ENCODE measurements at regions of chr7 and their contacts with region 1.

Region 1: DNA sequence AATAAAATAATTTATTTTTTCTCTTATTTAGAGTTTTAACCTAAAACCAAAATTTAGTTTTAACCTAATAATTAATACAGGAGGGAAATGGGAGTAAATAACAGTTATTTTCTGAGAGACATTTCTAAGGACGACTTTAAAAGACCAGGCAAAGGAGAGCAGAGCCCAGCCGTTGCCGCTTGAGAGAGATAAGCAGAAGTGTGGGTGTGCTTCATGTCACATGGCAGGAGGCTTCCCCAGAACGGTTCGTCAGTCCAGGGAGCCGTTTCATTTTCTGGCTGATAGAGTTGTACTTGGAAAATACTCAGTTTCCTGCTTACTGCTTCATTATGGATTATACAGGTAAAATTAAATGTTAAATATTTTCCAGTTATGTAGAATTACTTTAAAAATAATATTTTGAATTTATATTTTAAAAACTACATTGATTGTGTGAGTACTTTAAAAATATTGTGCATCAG is 61.4 kb downstream of the ST7 start:
- DNase-seq: peak; percentile 38
- H3K4me3 Mint-ChIP-seq: no peak overlapping the region
- H3K27ac Mint-ChIP-seq: no peak overlapping the region
- H3K4me1 Mint-ChIP-seq: peaks cover 42% of the 10 kb centered on the region
- H3K27me3 Mint-ChIP-seq: peaks cover 3% of the 10 kb centered on the region

Region 2: DNA sequence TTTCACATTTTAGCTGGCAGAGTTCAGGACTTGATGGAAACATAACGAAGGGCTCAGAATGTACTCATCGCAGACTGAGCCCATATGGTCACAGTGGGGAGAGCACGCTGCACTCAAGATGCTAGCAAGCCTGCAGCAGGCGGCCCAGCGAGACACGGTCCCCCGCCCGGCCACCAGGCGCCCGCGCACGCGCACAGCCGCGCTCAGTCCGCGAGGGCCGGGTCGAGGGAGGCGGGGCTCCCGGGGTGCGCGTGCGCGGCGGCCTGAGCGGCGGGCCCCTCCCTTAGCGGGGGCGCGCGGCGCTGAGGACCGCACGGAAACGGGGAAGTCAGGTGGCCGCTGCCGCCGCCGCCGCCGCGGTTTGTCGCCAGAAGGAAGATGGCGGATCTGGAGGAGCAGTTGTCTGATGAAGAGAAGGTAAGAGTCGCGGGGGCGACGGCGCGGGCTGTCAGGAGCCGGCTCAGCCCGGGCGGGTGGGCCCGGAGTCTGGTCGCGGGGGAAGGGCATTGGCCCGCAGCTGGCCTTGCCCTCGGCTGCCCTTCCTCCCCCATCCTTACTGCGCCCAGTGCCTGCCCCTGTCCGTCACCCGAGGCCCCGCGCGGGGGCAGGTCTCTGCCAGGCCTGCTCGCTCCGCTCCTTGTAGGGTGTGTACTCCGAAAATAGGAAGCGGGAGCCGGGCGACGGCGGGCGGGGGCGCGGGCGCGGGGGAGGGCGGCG is 152.3 kb before region 1 on chr7 and contains the start of gene CAPZA2:
- CTCF ChIA-PET with region 1: no interaction called
- POLR2A ChIA-PET with region 1: no interaction called
- intact Hi-C with region 1: loop called (anchors 10 kb)
- DNase-seq: peak; percentile 95
- H3K4me3 Mint-ChIP-seq: peak within 1 kb of the TSS; percentile 88
- H3K27ac Mint-ChIP-seq: peak within 1 kb of the TSS; percentile 90
- H3K4me1 Mint-ChIP-seq: peaks cover 39% of the 10 kb centered on the region
- H3K27me3 Mint-ChIP-seq: peaks cover 6% of the 10 kb centered on the region
- total RNA-seq, gene CAPZA2: 163 to 176 TPM

Region 3: DNA sequence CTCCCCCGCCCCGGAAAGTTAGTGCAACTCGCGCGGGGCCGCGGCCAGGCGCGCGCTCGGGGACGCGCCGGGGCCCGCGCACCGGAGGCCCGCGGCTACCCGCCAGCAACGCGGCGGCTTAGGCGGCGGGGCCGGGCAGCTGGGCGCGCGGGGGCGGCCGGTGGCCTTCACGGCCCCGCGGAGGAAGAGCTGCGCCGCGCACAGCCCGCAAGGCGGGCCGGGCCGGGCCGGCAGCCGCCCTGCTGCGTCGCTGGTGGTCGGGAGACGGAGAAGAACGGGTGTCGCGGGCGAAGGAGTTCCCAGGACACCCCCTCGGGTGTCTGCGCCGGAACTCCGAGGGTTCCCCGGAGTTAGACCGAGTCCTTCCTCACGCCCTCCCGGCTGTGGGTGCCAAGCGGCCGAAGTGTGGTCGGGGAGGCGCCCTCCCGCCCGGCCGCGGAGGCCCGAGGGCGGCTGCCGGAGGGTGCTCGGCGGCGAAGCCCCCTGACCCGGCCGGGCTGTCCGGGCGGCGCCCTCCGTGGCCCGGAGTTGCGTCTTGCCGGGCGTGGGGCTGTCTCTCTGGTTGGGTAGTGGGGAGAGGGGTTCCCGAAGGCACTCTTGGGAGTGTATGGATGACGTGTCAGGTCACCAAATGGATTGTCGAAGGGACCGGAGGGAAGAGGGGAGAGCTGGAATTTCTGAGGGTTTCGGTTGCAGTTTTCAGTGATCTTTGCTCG is 60.8 kb before region 1 on chr7:
- CTCF ChIA-PET with region 1: interaction called, 6 read pairs
- POLR2A ChIA-PET with region 1: no interaction called
- intact Hi-C with region 1: loop called (anchors 1 kb)
- DNase-seq: peak; percentile 31
- H3K4me3 Mint-ChIP-seq: peak overlapping the region; percentile 92
- H3K27ac Mint-ChIP-seq: peak overlapping the region; percentile 87
- H3K4me1 Mint-ChIP-seq: peaks cover 24% of the 10 kb centered on the region
- H3K27me3 Mint-ChIP-seq: no peaks in the 10 kb centered on the region

Region 4: DNA sequence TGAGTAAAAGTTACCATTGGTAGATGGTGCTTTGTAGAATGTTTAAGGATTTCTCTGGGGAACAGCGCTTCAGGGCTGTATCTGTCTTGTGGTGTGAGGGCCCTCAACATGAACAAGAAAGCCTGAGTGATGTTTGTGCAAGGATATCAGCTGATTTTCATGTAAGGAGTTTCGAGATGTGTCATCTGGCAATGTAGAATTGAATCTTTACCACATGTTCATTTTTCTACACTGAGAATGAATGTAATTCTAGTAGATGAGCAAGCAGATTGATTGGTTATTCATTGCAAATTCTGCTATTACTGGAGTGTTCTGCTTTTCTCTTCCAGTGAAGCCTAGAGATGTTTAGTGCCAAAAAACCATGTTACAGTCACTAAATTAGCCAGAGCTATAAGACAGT is 26.3 kb after region 1 on chr7:
- CTCF ChIA-PET with region 1: interaction called, 3 read pairs
- POLR2A ChIA-PET with region 1: interaction called, 3 read pairs
- intact Hi-C with region 1: loop called (anchors 1 kb)
- DNase-seq: no peak
- H3K4me3 Mint-ChIP-seq: no peak overlapping the region
- H3K27ac Mint-ChIP-seq: no peak overlapping the region
- H3K4me1 Mint-ChIP-seq: peaks cover 10% of the 10 kb centered on the region
- H3K27me3 Mint-ChIP-seq: no peaks in the 10 kb centered on the region

Region 5: GRCh38 chr7:117119192-117119924 is 104.7 kb after region 1 on chr7:
- CTCF ChIA-PET with region 1: interaction called, 42 read pairs
- POLR2A ChIA-PET with region 1: interaction called, 5 read pairs
- intact Hi-C with region 1: loop called (anchors 1 kb)
- DNase-seq: peak; percentile 80
- H3K4me3 Mint-ChIP-seq: no peak overlapping the region
- H3K27ac Mint-ChIP-seq: no peak overlapping the region
- H3K4me1 Mint-ChIP-seq: peaks cover 1% of the 10 kb centered on the region
- H3K27me3 Mint-ChIP-seq: no peaks in the 10 kb centered on the region